ENCODE measurements at regions of chr4 and their contacts with region 1.

Region 1: GRCh38 chr4:107736924-107737448 is 17.0 kb upstream of the PAPSS1 start:
- DNase-seq: peak; percentile 44
- ATAC-seq: peak; percentile 81
- H3K4me3 ChIP-seq: no peak overlapping the region
- H3K27ac ChIP-seq: no peak overlapping the region
- H3K4me1 ChIP-seq: no peaks in the 10 kb centered on the region
- H3K27me3 ChIP-seq: no peaks in the 10 kb centered on the region
- CTCF ChIP-seq: peak; percentile 47 to 94 (median 86); a peak in 5 of 6 replicates
- POLR2A ChIP-seq: no peak
- RAD21 ChIP-seq: peak; percentile 85

Region 2: DNA sequence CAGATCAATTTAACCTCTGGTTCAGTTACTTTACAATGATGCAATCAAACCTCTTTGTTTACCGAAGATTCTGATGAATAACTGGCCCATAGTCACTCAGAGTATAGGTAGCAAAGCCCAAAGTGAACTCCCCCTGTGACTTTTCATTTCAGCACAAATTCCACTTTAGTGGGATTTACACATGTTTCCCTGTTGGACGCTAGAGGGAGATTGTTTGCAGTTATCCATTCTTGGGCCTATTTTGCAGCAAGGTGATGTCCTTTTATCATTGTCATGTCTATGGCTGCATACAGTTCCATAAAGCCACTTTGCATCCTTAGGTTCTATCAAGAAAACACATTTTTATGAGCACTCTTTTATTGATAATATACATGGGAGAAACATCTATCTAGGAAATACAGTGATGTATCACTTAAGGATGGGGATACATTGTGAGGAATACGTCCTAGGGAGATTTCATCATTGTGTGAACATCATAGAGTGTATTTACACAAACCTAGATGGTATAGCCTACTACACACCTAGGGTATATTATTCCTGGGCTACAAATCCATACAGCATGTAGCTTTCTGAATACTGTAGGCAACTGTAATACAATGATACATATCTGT is 686.4 kb before region 1 on chr4:
- CTCF ChIA-PET with region 1: no interaction called
- POLR2A ChIA-PET with region 1: no interaction called
- RAD21 ChIA-PET with region 1: no interaction called
- intact Hi-C with region 1: loop called (anchors 2 kb)
- DNase-seq: peak; percentile 21
- ATAC-seq: peak; percentile 69
- H3K4me3 ChIP-seq: no peak overlapping the region
- H3K27ac ChIP-seq: no peak overlapping the region
- H3K4me1 ChIP-seq: no peaks in the 10 kb centered on the region
- H3K27me3 ChIP-seq: no peaks in the 10 kb centered on the region
- CTCF ChIP-seq: peak; percentile 37 to 73 (median 70); a peak in 5 of 6 replicates
- POLR2A ChIP-seq: no peak
- RAD21 ChIP-seq: peak; percentile 50

Region 3: GRCh38 chr4:107094332-107094731 is 642.7 kb before region 1 on chr4:
- CTCF ChIA-PET with region 1: no interaction called
- POLR2A ChIA-PET with region 1: no interaction called
- RAD21 ChIA-PET with region 1: no interaction called
- intact Hi-C with region 1: loop called (anchors 5 kb)
- DNase-seq: peak; percentile 32
- ATAC-seq: peak; percentile 75
- H3K4me3 ChIP-seq: no peak overlapping the region
- H3K27ac ChIP-seq: no peak overlapping the region
- H3K4me1 ChIP-seq: no peaks in the 10 kb centered on the region
- H3K27me3 ChIP-seq: no peaks in the 10 kb centered on the region
- CTCF ChIP-seq: peak; percentile 48 to 50 (median 49); a peak in 4 of 6 replicates
- POLR2A ChIP-seq: no peak
- RAD21 ChIP-seq: peak; percentile 58

Measured in HCT116 (cell line).